Transverse colon (tissue), 4 donors: ENCODE measurements at regions of chr20 and their contacts with region 1.

Region 1: GRCh38 chr20:45771182-45771759 is 20.4 kb downstream of the WFDC3 start:
- DNase-seq: peak; percentile 90
- H3K4me3 ChIP-seq: no peak overlapping the region
- H3K27ac ChIP-seq: peak overlapping the region; percentile 44 to 70 (median 62)
- H3K4me1 ChIP-seq: peaks cover 4 to 37% (median 16%) of the 10 kb centered on the region in 4 donors
- H3K27me3 ChIP-seq: no peaks in the 10 kb centered on the region
- CTCF ChIP-seq: peak; percentile 94 to 99 (median 96)
- EP300 ChIP-seq: no peak
- POLR2A ChIP-seq: no peak

Region 2: GRCh38 chr20:45311589-45312211 is 459.6 kb before region 1 on chr20:
- in situ Hi-C with region 1: loop called in 3 of 4 experiments (anchors 10 to 25 kb)
- intact Hi-C with region 1: loop called (anchors 5 kb)
- DNase-seq: peak; percentile 68
- H3K4me3 ChIP-seq: no peak overlapping the region
- H3K27ac ChIP-seq: no peak overlapping the region
- H3K4me1 ChIP-seq: peaks cover 0 to 13% (median 4%) of the 10 kb centered on the region in 4 donors
- H3K27me3 ChIP-seq: peaks cover 62% of the 10 kb centered on the region
- CTCF ChIP-seq: peak; percentile 65 to 86 (median 75)
- EP300 ChIP-seq: no peak
- POLR2A ChIP-seq: no peak

Region 3: DNA sequence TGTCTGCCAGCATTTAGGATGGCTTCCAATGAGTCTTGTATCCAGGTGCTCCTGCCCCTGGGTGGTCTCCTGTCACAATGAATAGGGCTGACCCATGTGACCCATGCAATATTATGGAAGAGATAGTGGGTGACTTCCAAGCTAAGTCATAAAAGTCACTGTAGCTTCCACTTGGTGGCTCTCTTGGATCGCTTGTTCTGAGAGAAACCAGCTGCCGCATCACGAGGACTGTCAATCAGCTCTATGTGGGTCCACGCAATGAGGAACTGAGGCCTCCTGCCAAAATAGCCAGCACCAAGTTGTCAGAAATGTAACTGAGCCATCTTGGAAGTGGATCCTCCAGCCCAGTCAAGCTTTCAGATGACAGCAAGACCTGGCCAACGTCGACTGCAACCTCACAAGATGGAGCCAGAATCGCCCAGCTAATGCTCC is 448.3 kb before region 1 on chr20:
- in situ Hi-C with region 1: loop called (anchors 10 to 25 kb)
- intact Hi-C with region 1: loop called (anchors 5 kb)
- DNase-seq: peak; percentile 60
- H3K4me3 ChIP-seq: no peak overlapping the region
- H3K27ac ChIP-seq: peak overlapping the region; percentile 22 to 67 (median 37)
- H3K4me1 ChIP-seq: peaks cover 5 to 35% (median 24%) of the 10 kb centered on the region in 4 donors
- H3K27me3 ChIP-seq: no peaks in the 10 kb centered on the region
- CTCF ChIP-seq: peak in 2 of 5 experiments; percentile 23 to 43
- EP300 ChIP-seq: no peak
- POLR2A ChIP-seq: no peak

Region 4: DNA sequence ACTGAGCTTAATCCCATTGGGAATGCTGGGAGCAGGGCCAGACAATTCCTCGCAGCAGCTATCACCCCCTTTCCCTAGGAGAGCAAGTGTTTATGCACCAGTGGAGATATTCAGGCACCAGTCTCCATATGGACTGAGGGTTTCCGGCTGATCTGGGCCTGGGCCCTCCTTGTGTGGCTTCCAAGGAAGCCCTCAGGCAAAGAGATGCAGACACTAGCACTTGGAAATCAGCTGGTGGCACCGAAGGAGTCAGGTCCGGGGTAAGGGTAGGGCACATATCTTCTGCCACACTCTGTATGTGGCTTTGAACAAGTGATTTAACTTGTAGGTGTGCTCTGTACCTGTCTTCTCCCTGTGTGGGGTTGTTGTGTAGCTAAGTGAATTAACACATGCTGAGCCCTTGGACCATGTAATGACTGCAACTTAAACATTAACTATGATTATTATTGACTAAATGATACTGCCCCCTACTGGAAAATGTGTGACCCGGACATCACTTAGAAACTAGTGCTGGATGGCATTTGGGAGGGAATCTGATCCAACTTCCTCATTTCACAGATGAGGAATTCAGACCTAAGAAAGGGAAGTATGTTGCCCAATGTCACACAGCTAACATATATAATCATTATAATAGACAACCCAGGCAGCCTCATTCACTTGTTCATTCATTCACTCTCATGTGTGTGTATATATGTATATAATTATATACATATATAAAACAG is 321.0 kb before region 1 on chr20:
- in situ Hi-C with region 1: loop called in 1 of 4 experiments (anchors 25 kb)
- intact Hi-C with region 1: no loop called
- DNase-seq: peak; percentile 23
- H3K4me3 ChIP-seq: no peak overlapping the region
- H3K27ac ChIP-seq: peak overlapping the region; percentile 76 to 86 (median 80)
- H3K4me1 ChIP-seq: peaks cover 0 to 13% (median 7%) of the 10 kb centered on the region in 4 donors
- H3K27me3 ChIP-seq: no peaks in the 10 kb centered on the region
- CTCF ChIP-seq: peak; percentile 58 to 78 (median 67)
- EP300 ChIP-seq: no peak
- POLR2A ChIP-seq: no peak

Region 5: GRCh38 chr20:45545754-45546453 is 225.4 kb before region 1 on chr20:
- in situ Hi-C with region 1: loop called in 2 of 4 experiments (anchors 25 kb)
- intact Hi-C with region 1: loop called (anchors 10 kb)
- DNase-seq: no peak
- H3K4me3 ChIP-seq: no peak overlapping the region
- H3K27ac ChIP-seq: no peak overlapping the region
- H3K4me1 ChIP-seq: no peaks in the 10 kb centered on the region
- H3K27me3 ChIP-seq: no peaks in the 10 kb centered on the region
- CTCF ChIP-seq: peak; percentile 21 to 51 (median 29)
- EP300 ChIP-seq: no peak
- POLR2A ChIP-seq: no peak

Region 6: GRCh38 chr20:45592574-45593189 is 178.6 kb before region 1 on chr20:
- in situ Hi-C with region 1: loop called in 1 of 4 experiments (anchors 25 kb)
- intact Hi-C with region 1: no loop called
- DNase-seq: no peak
- H3K4me3 ChIP-seq: no peak overlapping the region
- H3K27ac ChIP-seq: no peak overlapping the region
- H3K4me1 ChIP-seq: no peaks in the 10 kb centered on the region
- H3K27me3 ChIP-seq: no peaks in the 10 kb centered on the region
- CTCF ChIP-seq: peak; percentile 38 to 88 (median 63)
- EP300 ChIP-seq: no peak
- POLR2A ChIP-seq: no peak